PC-9 (cell line): ENCODE measurements at regions of chr7 and their contacts with region 1.

Region 1: DNA sequence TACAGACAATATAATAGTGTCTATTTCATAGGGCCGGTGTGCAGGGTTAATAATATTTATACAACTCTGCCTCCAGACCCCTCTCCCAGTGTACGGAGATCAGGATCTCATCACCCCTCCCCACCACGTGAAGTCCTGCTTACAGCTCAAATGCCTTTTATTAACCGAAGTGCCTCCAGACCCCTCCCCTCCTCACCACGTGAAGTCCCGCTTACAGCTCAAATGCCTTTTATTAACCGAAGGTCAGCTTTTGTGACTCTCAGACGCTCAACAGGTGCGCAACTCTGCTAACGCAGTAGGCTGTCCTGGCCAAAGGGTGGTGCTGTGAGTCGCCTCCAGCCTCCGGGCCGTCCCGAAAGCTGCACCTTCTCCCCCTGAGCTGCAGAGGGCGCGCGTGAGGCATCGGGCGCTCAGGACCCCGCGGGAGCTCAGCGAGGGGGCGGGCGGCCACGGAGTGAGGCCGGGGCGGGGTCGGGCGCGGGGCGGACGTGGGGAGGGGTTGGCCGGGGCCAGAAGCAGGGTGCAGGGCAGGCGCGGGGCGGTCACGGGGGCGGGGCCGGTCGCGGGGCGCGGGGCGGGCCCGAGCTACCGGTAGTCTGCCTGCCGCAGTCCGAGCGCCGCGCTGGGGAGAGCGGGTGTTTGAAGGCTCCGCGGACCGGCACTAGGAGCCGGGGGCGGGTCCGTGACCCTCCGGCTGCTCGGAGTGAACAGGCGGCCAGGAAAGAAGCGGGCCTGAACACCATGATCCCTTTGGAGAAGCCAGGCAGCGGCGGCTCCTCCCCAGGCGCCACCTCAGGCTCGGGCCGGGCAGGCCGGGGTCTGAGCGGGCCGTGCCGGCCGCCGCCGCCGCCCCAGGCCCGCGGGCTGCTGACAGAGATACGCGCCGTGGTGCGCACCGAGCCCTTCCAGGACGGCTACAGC is at the start of gene STK17A:
- DNase-seq: peak; percentile 90 to 99
- H3K4me3 ChIP-seq: peak within 1 kb of the TSS; percentile 93
- H3K27ac ChIP-seq: peak within 1 kb of the TSS; percentile 78
- H3K4me1 ChIP-seq: peaks cover 38% of the 10 kb centered on the region
- H3K27me3 ChIP-seq: no peaks in the 10 kb centered on the region
- CTCF ChIP-seq: peak; percentile 99
- total RNA-seq, gene STK17A: 15.8 and 18.8 TPM in 2 replicates

Region 2: DNA sequence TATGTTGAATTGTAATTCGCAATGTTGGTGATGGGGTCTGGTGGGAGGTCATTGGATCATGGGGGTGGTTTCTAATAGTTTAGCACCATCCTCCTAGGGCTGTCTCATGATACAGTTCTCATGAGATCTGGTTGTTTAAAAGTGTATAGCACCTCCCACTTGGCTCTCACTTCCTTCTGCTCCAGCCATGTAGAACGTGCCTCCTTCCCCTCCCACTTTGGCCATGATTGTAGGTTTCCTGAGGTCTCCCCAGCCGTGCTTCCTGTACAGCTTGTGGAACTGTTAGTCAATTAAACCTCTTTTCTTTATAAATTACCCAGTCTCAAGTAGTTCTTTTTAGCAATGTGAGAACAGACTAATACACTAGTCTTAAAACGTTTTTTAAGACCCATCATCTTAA is 485.9 kb before region 1 on chr7:
- CTCF ChIA-PET with region 1: no interaction called
- POLR2A ChIA-PET with region 1: interaction called, 10 read pairs
- intact Hi-C with region 1: no loop called
- DNase-seq: no peak
- H3K4me3 ChIP-seq: no peak overlapping the region
- H3K27ac ChIP-seq: no peak overlapping the region
- H3K4me1 ChIP-seq: no peaks in the 10 kb centered on the region
- H3K27me3 ChIP-seq: peaks cover 6% of the 10 kb centered on the region
- CTCF ChIP-seq: no peak

Region 3: DNA sequence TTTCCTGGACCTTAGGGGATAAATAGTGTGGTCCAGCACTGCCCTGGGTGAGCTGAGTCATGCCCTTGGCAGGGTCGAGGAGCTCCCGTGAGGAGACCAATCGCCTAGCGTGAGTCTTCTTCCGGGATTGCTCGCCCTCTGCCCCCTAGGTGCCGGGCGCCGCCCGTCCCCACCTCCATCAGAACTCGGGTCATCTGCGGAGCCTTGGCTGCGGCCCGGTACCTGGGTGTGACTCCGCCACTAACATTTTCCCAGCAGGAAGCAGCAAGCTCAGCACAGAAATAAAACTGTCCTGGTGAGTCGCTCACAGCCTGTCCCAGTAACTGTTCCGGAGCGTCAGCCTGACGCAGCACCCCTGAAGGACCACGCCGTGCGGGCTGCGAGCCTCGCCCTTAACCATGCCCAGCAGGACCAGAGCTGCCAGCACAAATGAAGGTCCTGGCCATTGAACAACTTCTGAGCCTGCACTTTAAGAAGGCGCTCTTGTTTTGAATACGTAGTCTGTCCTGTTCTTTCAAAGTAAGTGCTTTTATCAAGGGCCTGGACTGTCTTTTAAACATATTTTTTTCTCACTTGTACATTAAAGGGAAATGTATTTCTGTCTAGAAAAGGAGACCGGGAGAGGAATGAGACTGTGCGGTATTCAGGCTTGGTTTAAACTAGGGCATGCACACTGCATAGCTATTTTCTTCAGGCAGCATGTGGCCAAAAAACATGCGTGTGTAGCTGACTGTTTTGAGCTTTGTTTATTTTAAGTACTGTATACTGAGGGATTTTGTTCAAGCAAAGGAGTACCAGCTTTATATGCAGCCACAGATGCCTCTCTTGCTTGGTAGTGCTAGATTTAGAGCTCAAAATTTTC is 333.6 kb before region 1 on chr7:
- CTCF ChIA-PET with region 1: no interaction called
- POLR2A ChIA-PET with region 1: no interaction called
- intact Hi-C with region 1: no loop called
- DNase-seq: peak in 1 of 2 experiments; percentile 46
- H3K4me3 ChIP-seq: no peak overlapping the region; the same call in 1 of the 2 replicates
- H3K27ac ChIP-seq: no peak overlapping the region
- H3K4me1 ChIP-seq: no peaks in the 10 kb centered on the region
- H3K27me3 ChIP-seq: peaks cover 71% of the 10 kb centered on the region
- CTCF ChIP-seq: no peak

Region 4: DNA sequence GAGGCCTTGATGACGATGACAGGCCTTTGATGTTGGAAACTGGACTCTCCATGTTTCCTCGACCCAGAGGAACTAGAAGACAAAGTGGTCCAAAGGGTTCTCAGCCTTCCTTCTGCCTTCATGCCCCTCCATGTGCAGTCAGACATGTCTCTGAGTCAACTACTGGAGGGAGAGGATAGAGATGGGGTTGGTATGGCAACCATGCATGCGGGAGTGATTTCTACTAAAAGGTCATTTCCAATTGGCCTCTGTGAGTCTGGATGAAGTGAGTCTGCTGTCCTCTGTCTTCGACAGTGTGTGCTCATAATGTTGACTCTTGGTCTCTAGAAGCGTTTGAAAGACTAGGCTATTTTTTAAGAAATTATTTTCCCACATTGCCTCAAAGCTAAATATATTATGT is 29.4 kb after region 1 on chr7:
- CTCF ChIA-PET with region 1: no interaction called
- POLR2A ChIA-PET with region 1: interaction called, 30 read pairs
- intact Hi-C with region 1: no loop called
- DNase-seq: no peak
- H3K4me3 ChIP-seq: no peak overlapping the region
- H3K27ac ChIP-seq: no peak overlapping the region
- H3K4me1 ChIP-seq: no peaks in the 10 kb centered on the region
- H3K27me3 ChIP-seq: no peaks in the 10 kb centered on the region
- CTCF ChIP-seq: no peak

Region 5: DNA sequence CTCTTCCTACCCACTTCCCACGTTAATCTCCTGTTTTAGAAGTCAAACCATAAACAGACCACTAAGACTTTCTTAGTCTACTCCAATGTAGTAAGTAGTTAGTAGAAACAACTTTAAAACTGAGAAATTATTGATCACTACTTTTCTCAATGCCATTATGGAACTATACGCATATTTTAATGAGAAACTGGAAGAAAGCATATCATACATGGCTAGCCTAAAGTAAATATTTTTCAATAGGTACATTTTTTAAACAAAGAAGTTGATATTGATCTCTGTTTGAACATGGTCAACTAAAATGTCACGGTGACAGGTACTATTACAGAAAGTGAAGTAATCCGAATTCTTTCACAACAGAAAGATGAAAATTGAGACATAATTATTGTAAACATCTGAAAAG is 99.4 kb after region 1 on chr7:
- CTCF ChIA-PET with region 1: interaction called, 18 read pairs
- POLR2A ChIA-PET with region 1: no interaction called
- intact Hi-C with region 1: no loop called
- DNase-seq: no peak
- H3K4me3 ChIP-seq: no peak overlapping the region
- H3K27ac ChIP-seq: no peak overlapping the region
- H3K4me1 ChIP-seq: no peaks in the 10 kb centered on the region
- H3K27me3 ChIP-seq: no peaks in the 10 kb centered on the region
- CTCF ChIP-seq: no peak

Region 6: GRCh38 chr7:43729214-43729923 is 146.6 kb after region 1 on chr7 and contains the start of gene COA1:
- CTCF ChIA-PET with region 1: no interaction called
- POLR2A ChIA-PET with region 1: interaction called, 15 read pairs
- intact Hi-C with region 1: loop called (anchors 2 kb)
- DNase-seq: peak; percentile 88
- H3K4me3 ChIP-seq: peak within 1 kb of the TSS; percentile 70
- H3K27ac ChIP-seq: peak within 1 kb of the TSS; percentile 73
- H3K4me1 ChIP-seq: peaks cover 39% of the 10 kb centered on the region
- H3K27me3 ChIP-seq: no peaks in the 10 kb centered on the region
- CTCF ChIP-seq: no peak
- total RNA-seq, gene COA1: 128 and 151 TPM in 2 replicates

Region 7: DNA sequence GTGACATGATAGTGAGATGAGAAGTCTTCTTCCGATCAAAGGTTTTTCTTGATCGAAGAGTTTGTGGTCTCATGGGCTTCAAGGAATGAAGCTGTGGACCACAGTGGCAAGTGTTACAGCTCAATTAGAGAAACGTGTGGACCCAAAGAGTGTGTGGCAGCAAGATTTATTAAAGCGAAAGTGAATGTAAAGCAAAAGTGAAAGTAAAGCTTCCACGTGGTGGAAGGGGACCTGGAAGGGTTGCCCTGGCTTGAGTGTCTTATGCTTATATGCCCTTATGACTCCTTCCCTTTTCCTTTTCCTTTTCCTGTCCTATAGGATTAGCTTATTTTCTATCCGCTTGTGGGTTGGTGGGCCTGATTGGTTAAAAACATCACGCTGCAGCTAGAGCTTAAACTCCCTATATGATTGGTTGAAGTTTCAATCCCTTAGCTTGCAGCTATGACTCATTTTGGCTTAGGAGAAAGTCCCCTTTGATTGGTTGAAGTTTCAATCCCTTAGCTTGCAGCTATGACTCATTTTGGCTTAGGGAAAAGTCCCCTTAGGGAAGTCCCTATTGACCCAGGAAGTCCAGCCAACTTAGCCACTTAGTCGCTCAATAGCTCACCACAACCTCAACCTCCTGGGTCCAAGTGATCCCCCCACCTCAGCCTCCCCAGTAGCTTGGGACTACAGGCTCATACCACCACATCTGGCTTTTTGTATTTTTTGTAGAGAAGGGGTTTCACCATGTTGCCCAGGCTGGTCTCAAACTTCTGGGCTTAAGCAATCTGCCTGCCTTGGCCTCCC is 251.9 kb after region 1 on chr7:
- CTCF ChIA-PET with region 1: interaction called, 11 read pairs
- POLR2A ChIA-PET with region 1: interaction called, 6 read pairs
- intact Hi-C with region 1: loop called (anchors 1 kb)
- DNase-seq: peak in 1 of 2 experiments; percentile 83
- H3K4me3 ChIP-seq: peak overlapping the region; percentile 36; the same call in 1 of the 2 replicates
- H3K27ac ChIP-seq: no peak overlapping the region
- H3K4me1 ChIP-seq: no peaks in the 10 kb centered on the region; the same call in 1 of the 2 replicates
- H3K27me3 ChIP-seq: no peaks in the 10 kb centered on the region
- CTCF ChIP-seq: no peak

Region 8: GRCh38 chr7:43977525-43977924 is 394.8 kb after region 1 on chr7:
- CTCF ChIA-PET with region 1: interaction called, 15 read pairs
- POLR2A ChIA-PET with region 1: no interaction called
- intact Hi-C with region 1: no loop called
- DNase-seq: no peak
- H3K4me3 ChIP-seq: no peak overlapping the region
- H3K27ac ChIP-seq: no peak overlapping the region
- H3K4me1 ChIP-seq: no peaks in the 10 kb centered on the region
- H3K27me3 ChIP-seq: no peaks in the 10 kb centered on the region
- CTCF ChIP-seq: no peak